ENCODE measurements at regions of chr7 and their contacts with region 1.

Region 1: GRCh38 chr7:105013221-105013815 is 687 bp upstream of the KMT2E start:
- DNase-seq: peak; percentile 97
- ATAC-seq: peak; percentile 63
- H3K4me3 Mint-ChIP-seq: peak overlapping the region; percentile 96
- H3K27ac Mint-ChIP-seq: peak overlapping the region; percentile 100
- H3K4me1 Mint-ChIP-seq: peaks cover 14% of the 10 kb centered on the region
- H3K27me3 Mint-ChIP-seq: no peaks in the 10 kb centered on the region

Region 2: GRCh38 chr7:104983578-104984539 is 29.5 kb before region 1 on chr7:
- CTCF ChIA-PET with region 1: interaction called, 128 read pairs
- POLR2A ChIA-PET with region 1: interaction called, 69 read pairs
- intact Hi-C with region 1: loop called (anchors 1 kb)
- DNase-seq: peak; percentile 93
- ATAC-seq: peak; percentile 89
- H3K4me3 Mint-ChIP-seq: peak overlapping the region; percentile 87
- H3K27ac Mint-ChIP-seq: peak overlapping the region; percentile 99
- H3K4me1 Mint-ChIP-seq: peaks cover 74% of the 10 kb centered on the region
- H3K27me3 Mint-ChIP-seq: no peaks in the 10 kb centered on the region

Region 3: GRCh38 chr7:105268511-105269392 is 255.4 kb after region 1 on chr7:
- CTCF ChIA-PET with region 1: interaction called, 3 read pairs
- POLR2A ChIA-PET with region 1: interaction called, 3 read pairs
- intact Hi-C with region 1: loop called in 1 of 2 experiments (anchors 2 kb)
- DNase-seq: no peak
- ATAC-seq: peak; percentile 65
- H3K4me3 Mint-ChIP-seq: peak overlapping the region; percentile 78
- H3K27ac Mint-ChIP-seq: peak overlapping the region; percentile 96
- H3K4me1 Mint-ChIP-seq: peaks cover 63% of the 10 kb centered on the region
- H3K27me3 Mint-ChIP-seq: no peaks in the 10 kb centered on the region

Region 4: GRCh38 chr7:105336009-105336408 is 322.7 kb after region 1 on chr7:
- CTCF ChIA-PET with region 1: no interaction called
- POLR2A ChIA-PET with region 1: no interaction called
- intact Hi-C with region 1: no loop called
- DNase-seq: no peak
- ATAC-seq: no peak
- H3K4me3 Mint-ChIP-seq: no peak overlapping the region
- H3K27ac Mint-ChIP-seq: no peak overlapping the region
- H3K4me1 Mint-ChIP-seq: peaks cover 21% of the 10 kb centered on the region
- H3K27me3 Mint-ChIP-seq: no peaks in the 10 kb centered on the region

Region 5: GRCh38 chr7:105522062-105522936 is 509.0 kb after region 1 on chr7 and contains the start of gene PUS7:
- CTCF ChIA-PET with region 1: no interaction called
- POLR2A ChIA-PET with region 1: no interaction called
- intact Hi-C with region 1: loop called in 1 of 2 experiments (anchors 2 kb)
- DNase-seq: peak; percentile 91
- ATAC-seq: peak; percentile 89
- H3K4me3 Mint-ChIP-seq: peak within 1 kb of the TSS; percentile 92
- H3K27ac Mint-ChIP-seq: peak within 1 kb of the TSS; percentile 90
- H3K4me1 Mint-ChIP-seq: peaks cover 17% of the 10 kb centered on the region
- H3K27me3 Mint-ChIP-seq: no peaks in the 10 kb centered on the region
- total RNA-seq, gene PUS7: 31.9 to 33.8 TPM

Region 6: DNA sequence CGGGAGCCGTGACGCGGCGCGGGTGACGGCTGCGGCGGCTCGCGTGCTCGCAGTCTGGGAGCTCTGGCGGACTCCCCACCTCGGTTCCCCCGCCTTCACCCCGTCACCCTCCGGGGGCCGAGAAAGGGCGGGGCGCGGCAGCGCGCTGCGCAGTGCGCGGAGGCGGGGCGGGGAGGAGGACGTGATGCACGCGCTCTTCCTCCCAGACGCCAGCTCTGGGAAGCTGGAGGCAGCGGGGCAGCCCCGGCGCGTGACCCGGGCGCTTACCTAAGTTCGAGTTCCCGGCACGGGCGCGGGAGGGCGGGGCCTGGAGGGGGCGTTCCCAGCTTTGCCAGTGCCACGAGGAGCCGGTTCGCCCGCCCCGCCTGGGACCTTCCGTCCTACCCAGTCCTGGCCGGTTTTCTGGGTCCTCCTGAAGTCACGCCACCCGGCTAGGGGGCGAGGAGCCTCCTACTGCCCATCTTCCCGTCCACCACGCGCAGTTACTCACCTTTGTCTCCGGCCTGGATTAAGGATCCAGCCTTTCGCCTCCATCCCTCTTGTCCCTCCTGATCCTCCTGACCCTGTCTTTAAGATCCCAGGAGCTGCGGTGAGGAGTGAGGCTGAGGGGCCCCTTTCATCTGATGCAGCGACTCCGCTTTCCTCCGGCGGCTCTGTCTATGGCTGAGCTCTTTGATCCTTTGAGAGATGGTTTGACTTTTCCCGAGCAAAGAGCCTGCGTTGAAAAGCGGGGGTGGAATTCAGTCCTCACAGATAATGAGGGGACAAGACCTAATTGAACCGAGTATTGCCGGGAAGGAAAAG is 1271.9 kb after region 1 on chr7:
- CTCF ChIA-PET with region 1: no interaction called
- POLR2A ChIA-PET with region 1: interaction called, 3 read pairs
- intact Hi-C with region 1: loop called in 1 of 2 experiments (anchors 2 kb)
- DNase-seq: peak; percentile 100
- ATAC-seq: peak; percentile 80
- H3K4me3 Mint-ChIP-seq: peak overlapping the region; percentile 94
- H3K27ac Mint-ChIP-seq: peak overlapping the region; percentile 99
- H3K4me1 Mint-ChIP-seq: peaks cover 45% of the 10 kb centered on the region
- H3K27me3 Mint-ChIP-seq: no peaks in the 10 kb centered on the region

Measured in activated CD4-positive, alpha-beta T cell treated with anti-CD3 and anti-CD28 coated beads for 36 hours (primary cell).